Sigmoid colon (tissue), 7 donors: ENCODE measurements at regions of chr1 and their contacts with region 1.

Region 1: DNA sequence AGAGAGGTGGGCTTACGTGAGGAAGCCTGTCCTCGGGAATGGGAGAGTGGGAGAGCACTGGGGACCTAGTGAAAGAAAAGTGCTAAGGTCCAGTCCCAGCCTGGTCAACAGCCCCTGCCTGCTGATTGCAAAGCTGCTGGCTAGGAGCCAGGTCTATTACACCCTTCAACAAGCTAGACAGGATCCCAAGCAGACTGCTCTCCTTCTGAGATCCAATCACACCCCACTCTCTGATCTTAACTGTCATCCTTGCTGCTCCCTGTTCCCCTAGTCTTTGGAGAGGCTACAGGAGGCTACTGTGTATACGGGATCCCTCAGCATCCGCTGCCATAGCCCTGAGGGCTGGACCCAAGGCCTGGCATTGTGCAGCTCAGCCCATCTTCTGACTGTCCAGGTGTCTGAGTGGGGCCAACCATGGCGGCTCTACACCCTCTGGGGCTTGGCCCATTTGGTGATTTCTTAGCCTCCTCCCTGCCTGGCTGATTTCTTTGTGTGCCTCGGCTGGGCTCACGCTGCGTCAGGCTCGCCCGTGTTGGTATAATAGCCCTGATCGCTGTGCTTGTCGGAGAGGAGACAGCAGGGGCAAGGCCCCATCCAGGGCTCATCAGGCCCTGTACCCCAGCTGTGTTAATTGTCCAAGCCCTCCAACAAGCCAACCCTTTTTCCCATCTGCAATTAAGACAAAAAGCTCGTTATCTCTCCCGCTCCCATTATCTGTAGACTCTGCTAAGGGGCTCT is 43.9 kb downstream of the NAV1 start:
- DNase-seq: peak; percentile 80
- H3K4me3 ChIP-seq: no peak overlapping the region
- H3K27ac ChIP-seq: no peak overlapping the region
- H3K4me1 ChIP-seq: peaks cover 0 to 40% (median 37%) of the 10 kb centered on the region in 4 donors
- H3K27me3 ChIP-seq: no peaks in the 10 kb centered on the region
- CTCF ChIP-seq: no peak
- EP300 ChIP-seq: no peak
- POLR2A ChIP-seq: no peak

Region 2: GRCh38 chr1:201334325-201335173 is 248.3 kb before region 1 on chr1:
- intact Hi-C with region 1: no loop called
- DNase-seq: peak; percentile 13
- H3K4me3 ChIP-seq: no peak overlapping the region
- H3K27ac ChIP-seq: no peak overlapping the region
- H3K4me1 ChIP-seq: peaks cover 0 to under 1% (median 0%) of the 10 kb centered on the region in 4 donors
- H3K27me3 ChIP-seq: no peaks in the 10 kb centered on the region
- CTCF ChIP-seq: no peak
- EP300 ChIP-seq: no peak
- POLR2A ChIP-seq: no peak

Region 3: DNA sequence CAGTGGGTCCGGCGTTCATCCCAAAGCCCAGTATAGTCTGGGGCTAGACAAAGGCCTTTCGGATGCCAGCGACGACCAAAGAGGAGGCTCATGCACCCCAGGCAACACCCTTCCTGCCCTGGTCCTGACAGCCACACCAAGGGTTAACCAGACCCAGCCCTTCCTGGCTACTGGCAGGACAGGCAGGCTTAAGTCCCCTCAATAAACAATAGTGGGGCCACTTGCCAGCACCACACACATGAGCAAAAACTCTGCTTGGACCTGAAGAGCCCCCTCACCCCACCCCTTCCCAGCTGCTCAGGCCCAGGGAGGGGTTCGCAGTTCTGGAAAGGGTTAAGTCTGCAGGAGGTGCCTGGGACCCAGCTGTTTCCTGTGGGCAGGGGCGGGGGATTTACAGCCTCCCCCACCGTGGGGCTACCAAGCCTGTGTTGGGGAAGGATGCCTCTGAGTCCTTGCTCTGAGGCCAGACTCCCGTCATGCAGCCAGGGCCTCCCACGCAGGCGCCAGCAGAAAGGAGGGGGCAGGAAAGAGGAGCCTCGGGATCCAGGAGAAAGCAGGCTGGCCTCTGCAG is 132.1 kb before region 1 on chr1:
- intact Hi-C with region 1: no loop called
- DNase-seq: peak; percentile 90
- H3K4me3 ChIP-seq: no peak overlapping the region
- H3K27ac ChIP-seq: peak overlapping the region; percentile 23 to 78 (median 70)
- H3K4me1 ChIP-seq: peaks cover 0 to 41% (median 40%) of the 10 kb centered on the region in 4 donors
- H3K27me3 ChIP-seq: no peaks in the 10 kb centered on the region
- CTCF ChIP-seq: no peak
- EP300 ChIP-seq: no peak
- POLR2A ChIP-seq: no peak

Region 4: GRCh38 chr1:201686714-201687455 is 104.0 kb after region 1 on chr1:
- intact Hi-C with region 1: loop called (anchors 5 kb)
- DNase-seq: no peak
- H3K4me3 ChIP-seq: no peak overlapping the region
- H3K27ac ChIP-seq: no peak overlapping the region
- H3K4me1 ChIP-seq: peaks cover 0 to 7% (median 3%) of the 10 kb centered on the region in 4 donors
- H3K27me3 ChIP-seq: no peaks in the 10 kb centered on the region
- CTCF ChIP-seq: no peak
- EP300 ChIP-seq: no peak
- POLR2A ChIP-seq: no peak